Activated T-helper 1 cell treated with anti-CD3 and anti-CD28 coated beads, Interleukin-12 subunit alpha, Interleukin-12 subunit beta, Interleukin-2, Interleukin-4 antibody, amounts not matched to agents 30 ng/mL and 10 ng/mL and 1 ng/mL, durations not matched to agents 14 hours and 24 hours and 36 hours (primary cell): ENCODE measurements at regions of chr9 and their contacts with region 1.

Region 1: GRCh38 chr9:37903647-37904444 is at the start of gene SLC25A51:
- DNase-seq: peak; percentile 92
- H3K4me3 Mint-ChIP-seq: peak within 1 kb of the TSS; percentile 90
- H3K27ac Mint-ChIP-seq: peak within 1 kb of the TSS; percentile 94
- H3K4me1 Mint-ChIP-seq: peaks cover 35% of the 10 kb centered on the region
- H3K27me3 Mint-ChIP-seq: peaks cover 5% of the 10 kb centered on the region
- total RNA-seq, gene SLC25A51: 30.0 and 31.3 TPM in 2 replicates

Region 2: DNA sequence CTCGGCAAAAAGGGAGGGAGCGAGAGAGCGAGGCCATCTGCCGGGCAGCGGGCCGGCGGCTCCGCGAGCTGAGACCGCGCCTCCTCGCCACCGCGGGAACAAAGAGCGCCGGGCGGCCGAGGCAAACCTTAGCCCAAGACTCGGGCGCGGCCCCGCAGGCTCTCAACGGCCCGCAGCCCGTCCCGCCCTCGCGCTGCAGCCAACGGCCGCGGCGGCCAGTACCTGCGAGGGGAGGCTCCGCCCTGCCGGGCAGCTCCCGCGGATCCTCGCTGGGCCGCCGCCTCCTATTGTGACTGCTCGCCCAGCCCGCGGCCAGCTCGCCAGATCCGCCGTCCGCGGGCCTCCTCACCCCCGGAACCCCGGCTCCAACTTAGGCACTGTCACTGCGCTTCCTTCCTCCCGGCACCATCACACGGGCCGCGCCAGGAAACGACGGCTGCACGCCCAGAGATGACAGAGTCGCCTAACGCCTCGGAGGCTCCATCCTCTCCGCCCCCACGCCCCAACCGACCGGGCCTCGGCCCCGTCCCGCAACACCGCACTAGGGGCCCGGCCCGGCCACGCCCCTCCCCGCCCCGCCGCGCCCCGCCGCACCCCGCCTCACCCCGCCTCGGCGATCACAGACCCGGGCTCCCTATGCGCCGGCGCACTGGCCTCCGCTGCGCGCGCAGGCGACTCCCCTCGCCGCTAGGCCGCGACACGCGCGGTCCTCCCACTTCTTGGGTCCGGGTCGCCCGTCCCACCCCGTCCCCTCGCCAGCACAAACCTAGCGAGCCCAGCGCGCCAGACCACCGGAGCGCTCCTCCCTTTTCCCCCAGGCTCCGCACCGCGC is 1503.3 kb before region 1 on chr9:
- intact Hi-C with region 1: loop called (anchors 2 kb)
- DNase-seq: peak; percentile 86
- H3K4me3 Mint-ChIP-seq: peak overlapping the region; percentile 89
- H3K27ac Mint-ChIP-seq: peak overlapping the region; percentile 97
- H3K4me1 Mint-ChIP-seq: peaks cover 47% of the 10 kb centered on the region
- H3K27me3 Mint-ChIP-seq: no peaks in the 10 kb centered on the region

Region 3: GRCh38 chr9:37465249-37466036 is 438.4 kb before region 1 on chr9 and contains the start of gene ZBTB5:
- intact Hi-C with region 1: loop called (anchors 5 kb)
- DNase-seq: peak; percentile 98
- H3K4me3 Mint-ChIP-seq: peak within 1 kb of the TSS; percentile 97
- H3K27ac Mint-ChIP-seq: peak within 1 kb of the TSS; percentile 95
- H3K4me1 Mint-ChIP-seq: peaks cover 47% of the 10 kb centered on the region
- H3K27me3 Mint-ChIP-seq: no peaks in the 10 kb centered on the region
- total RNA-seq, gene ZBTB5: 9.6 and 11.2 TPM in 2 replicates

Region 4: GRCh38 chr9:37592108-37592951 is 311.5 kb before region 1 on chr9 and contains the start of gene TOMM5:
- intact Hi-C with region 1: loop called (anchors 1 kb)
- DNase-seq: peak; percentile 89
- H3K4me3 Mint-ChIP-seq: peak within 1 kb of the TSS; percentile 94
- H3K27ac Mint-ChIP-seq: peak within 1 kb of the TSS; percentile 96
- H3K4me1 Mint-ChIP-seq: peaks cover 29% of the 10 kb centered on the region
- H3K27me3 Mint-ChIP-seq: peaks cover 8% of the 10 kb centered on the region
- total RNA-seq, gene TOMM5: 174 and 175 TPM in 2 replicates

Region 5: DNA sequence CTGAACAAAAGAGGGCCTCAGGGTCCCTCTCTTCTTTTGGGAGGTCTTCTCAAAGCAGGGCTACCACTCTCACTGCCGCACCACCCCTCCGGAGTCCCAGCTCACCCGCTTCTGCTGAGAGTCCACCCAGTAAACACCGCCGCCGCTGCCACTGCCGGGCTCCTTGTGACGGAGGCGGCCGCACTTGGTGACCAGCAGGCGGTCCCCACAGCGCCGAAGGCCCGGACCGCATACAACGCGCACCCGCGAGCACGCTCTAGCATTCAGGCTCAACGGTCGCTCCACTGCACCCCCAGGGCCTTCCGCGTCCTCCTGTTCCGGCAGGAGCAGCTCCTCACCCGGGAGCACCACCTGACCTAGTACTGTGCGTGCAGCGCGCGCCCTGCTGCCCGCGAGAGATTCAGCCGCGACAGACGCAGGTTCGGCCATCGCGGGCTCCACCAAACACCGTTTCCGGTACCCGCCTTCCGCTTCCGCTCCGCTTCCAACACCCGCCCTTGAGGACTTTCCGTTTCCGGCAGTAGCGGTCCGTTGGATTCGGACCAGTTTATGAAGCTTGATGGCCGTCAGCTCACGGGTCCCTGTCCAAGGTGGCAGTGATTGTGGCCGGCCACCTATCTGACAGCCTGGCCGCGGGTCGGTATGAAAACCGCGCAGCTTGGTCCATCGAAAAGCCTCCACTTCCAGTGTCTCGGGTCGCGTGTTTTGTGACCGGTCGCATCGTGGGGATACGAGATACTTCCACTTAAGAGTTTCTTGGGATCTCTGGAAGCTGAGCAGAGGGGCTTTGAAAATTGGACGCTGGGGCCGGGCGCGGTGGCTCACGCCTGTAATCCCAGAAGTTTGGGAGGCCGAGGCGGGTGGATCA is 119.0 kb before region 1 on chr9 and contains the start of gene EXOSC3:
- intact Hi-C with region 1: loop called (anchors 1 kb)
- DNase-seq: peak; percentile 85
- H3K4me3 Mint-ChIP-seq: peak within 1 kb of the TSS; percentile 99
- H3K27ac Mint-ChIP-seq: peak within 1 kb of the TSS; percentile 97
- H3K4me1 Mint-ChIP-seq: peaks cover 40% of the 10 kb centered on the region
- H3K27me3 Mint-ChIP-seq: no peaks in the 10 kb centered on the region
- total RNA-seq, gene EXOSC3: 94.8 and 116 TPM in 2 replicates

Region 6: DNA sequence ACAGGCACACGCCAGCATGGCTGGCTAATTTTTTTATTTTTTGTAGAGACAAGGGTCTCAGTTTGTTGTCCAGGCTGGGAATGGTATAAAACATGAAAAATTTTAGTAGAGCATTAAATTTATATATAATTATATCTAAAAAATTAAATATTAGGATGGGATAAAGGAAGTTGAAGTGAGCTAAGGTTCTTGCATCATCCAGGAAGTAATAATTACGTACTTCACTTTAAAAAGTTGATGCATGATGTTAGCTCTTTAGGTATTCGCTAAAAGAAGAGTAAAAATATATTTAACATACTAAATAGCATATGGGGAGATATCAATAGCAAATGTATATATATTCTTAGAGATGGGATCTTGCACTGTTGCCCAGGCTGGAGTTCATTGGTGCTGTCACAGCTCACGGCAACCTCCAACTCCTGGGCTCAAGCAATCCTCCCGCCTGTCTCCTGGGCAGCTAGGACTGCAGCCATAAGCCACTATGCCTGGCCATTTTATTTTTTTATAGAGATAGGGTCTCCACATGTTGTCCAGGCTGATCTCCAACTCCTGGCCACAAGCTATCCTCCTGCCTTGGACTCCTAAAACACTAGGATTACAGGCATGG is 91.0 kb before region 1 on chr9:
- intact Hi-C with region 1: no loop called
- DNase-seq: no peak
- H3K4me3 Mint-ChIP-seq: no peak overlapping the region
- H3K27ac Mint-ChIP-seq: no peak overlapping the region
- H3K4me1 Mint-ChIP-seq: peaks cover 5% of the 10 kb centered on the region
- H3K27me3 Mint-ChIP-seq: no peaks in the 10 kb centered on the region

Region 7: GRCh38 chr9:37840560-37841194 is 63.2 kb before region 1 on chr9:
- intact Hi-C with region 1: loop called (anchors 5 kb)
- DNase-seq: no peak
- H3K4me3 Mint-ChIP-seq: no peak overlapping the region
- H3K27ac Mint-ChIP-seq: no peak overlapping the region
- H3K4me1 Mint-ChIP-seq: peaks cover 11% of the 10 kb centered on the region
- H3K27me3 Mint-ChIP-seq: no peaks in the 10 kb centered on the region

Region 8: DNA sequence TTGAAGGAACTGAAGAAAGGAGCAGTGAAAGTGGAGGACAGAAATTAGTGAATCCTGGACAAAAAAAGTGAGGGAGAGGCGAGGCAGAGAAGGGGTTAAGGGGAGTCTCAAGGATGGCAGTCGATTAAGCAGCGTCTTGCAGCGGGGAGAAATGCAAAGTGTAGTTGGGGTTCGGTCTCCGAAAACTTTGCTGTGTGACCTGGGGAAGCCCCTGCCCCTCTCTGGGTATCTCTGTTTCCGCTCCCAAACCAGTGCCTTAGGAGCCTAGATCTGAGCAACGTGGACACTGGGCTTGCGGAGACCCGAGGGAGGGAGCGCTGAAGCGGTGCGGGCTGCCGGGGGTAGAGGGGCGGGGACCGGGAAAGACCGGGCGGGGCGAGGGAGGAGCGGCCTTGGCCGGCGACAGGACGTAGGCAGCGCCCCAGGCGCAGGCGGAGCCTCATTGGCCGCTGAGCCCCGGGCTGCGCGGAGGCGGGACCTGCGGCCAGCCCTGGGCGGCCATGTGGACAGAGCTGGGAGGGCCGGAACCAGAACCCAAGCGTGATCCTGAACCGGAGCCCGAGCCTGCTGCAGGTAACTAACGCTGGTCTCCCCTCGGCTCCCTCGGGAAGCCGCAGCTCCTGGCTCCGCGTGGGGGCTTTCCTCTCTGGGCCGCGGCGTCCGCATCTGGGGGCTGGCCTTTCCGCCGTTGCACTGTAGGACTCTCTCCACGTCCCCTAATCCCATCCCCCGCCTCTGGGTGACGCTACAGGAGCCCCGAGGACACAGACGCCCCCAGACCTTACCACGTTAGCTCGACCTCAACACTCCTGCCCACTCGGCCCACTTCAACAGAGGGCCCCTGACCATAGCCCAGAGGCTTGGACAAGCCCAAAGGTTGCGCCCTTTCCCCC is 488.6 kb after region 1 on chr9 and contains the start of gene ALDH1B1:
- intact Hi-C with region 1: loop called (anchors 2 kb)
- DNase-seq: peak; percentile 74
- H3K4me3 Mint-ChIP-seq: peak within 1 kb of the TSS; percentile 95
- H3K27ac Mint-ChIP-seq: peak within 1 kb of the TSS; percentile 87
- H3K4me1 Mint-ChIP-seq: peaks cover 11% of the 10 kb centered on the region
- H3K27me3 Mint-ChIP-seq: peaks cover 15% of the 10 kb centered on the region
- total RNA-seq, gene ALDH1B1: 31.2 and 31.4 TPM in 2 replicates